Caco-2 (cell line): ENCODE measurements at regions of chr11 and their contacts with region 1.

Region 1: GRCh38 chr11:96098514-96099241 is 174.8 kb upstream of the MTMR2 start:
- DNase-seq: peak; percentile 90 to 91
- H3K4me3 ChIP-seq: no peak overlapping the region
- H3K4me3 Mint-ChIP-seq: peak overlapping the region; percentile 65
- H3K27ac Mint-ChIP-seq: peak overlapping the region; percentile 94
- H3K4me1 ChIP-seq: peaks cover 75% of the 10 kb centered on the region
- H3K4me1 Mint-ChIP-seq: peaks cover 71% of the 10 kb centered on the region
- H3K27me3 ChIP-seq: no peaks in the 10 kb centered on the region
- H3K27me3 Mint-ChIP-seq: no peaks in the 10 kb centered on the region
- CTCF ChIP-seq: no peak

Region 2: GRCh38 chr11:95688580-95689189 is 410.0 kb before region 1 on chr11:
- CTCF ChIA-PET with region 1: no interaction called
- POLR2A ChIA-PET with region 1: no interaction called
- intact Hi-C with region 1: no loop called
- DNase-seq: no peak
- H3K4me3 ChIP-seq: no peak overlapping the region
- H3K4me3 Mint-ChIP-seq: no peak overlapping the region
- H3K27ac Mint-ChIP-seq: no peak overlapping the region
- H3K4me1 ChIP-seq: no peaks in the 10 kb centered on the region
- H3K4me1 Mint-ChIP-seq: no peaks in the 10 kb centered on the region
- H3K27me3 ChIP-seq: no peaks in the 10 kb centered on the region; the same call in 1 of the 2 replicates
- H3K27me3 Mint-ChIP-seq: no peaks in the 10 kb centered on the region
- CTCF ChIP-seq: no peak

Region 3: DNA sequence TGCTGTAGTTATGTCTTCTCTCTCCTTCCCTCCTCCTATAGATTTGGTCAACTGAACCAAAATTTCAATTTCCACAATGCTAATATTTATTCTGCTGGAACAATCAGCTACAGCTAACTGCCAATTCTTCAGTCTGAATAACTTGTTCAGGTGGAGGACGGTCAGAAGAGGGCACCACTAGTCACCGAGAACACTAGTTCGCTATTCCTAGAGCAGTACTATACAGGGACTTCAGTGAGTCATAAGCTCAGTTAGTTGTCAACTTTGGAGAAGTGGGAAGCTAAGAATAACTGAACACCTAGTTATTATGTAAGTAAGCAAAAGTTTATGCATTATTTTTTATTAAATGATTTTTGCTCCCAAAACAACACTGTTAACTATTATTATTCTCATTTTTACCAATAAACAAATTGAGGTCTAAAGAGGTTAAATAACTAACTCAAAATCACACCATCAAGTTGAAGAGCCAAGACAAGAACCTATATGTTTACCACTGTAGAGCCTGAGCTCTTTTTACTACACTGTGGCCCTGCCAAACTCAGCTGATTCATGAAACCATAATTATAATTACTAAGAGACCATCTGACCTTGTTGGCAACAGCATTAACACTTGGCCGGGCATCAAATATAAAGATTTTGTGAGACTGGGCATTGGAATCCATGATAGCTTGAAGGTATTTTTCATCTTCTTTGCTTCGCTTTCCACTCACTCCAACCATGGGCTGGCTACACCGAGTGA is 249.4 kb before region 1 on chr11:
- CTCF ChIA-PET with region 1: no interaction called
- POLR2A ChIA-PET with region 1: no interaction called
- intact Hi-C with region 1: loop called (anchors 2 kb)
- DNase-seq: peak; percentile 75 to 81
- H3K4me3 ChIP-seq: no peak overlapping the region
- H3K4me3 Mint-ChIP-seq: no peak overlapping the region
- H3K27ac Mint-ChIP-seq: no peak overlapping the region
- H3K4me1 ChIP-seq: no peaks in the 10 kb centered on the region
- H3K4me1 Mint-ChIP-seq: no peaks in the 10 kb centered on the region
- H3K27me3 ChIP-seq: no peaks in the 10 kb centered on the region
- H3K27me3 Mint-ChIP-seq: no peaks in the 10 kb centered on the region
- CTCF ChIP-seq: peak; percentile 71 to 85

Region 4: DNA sequence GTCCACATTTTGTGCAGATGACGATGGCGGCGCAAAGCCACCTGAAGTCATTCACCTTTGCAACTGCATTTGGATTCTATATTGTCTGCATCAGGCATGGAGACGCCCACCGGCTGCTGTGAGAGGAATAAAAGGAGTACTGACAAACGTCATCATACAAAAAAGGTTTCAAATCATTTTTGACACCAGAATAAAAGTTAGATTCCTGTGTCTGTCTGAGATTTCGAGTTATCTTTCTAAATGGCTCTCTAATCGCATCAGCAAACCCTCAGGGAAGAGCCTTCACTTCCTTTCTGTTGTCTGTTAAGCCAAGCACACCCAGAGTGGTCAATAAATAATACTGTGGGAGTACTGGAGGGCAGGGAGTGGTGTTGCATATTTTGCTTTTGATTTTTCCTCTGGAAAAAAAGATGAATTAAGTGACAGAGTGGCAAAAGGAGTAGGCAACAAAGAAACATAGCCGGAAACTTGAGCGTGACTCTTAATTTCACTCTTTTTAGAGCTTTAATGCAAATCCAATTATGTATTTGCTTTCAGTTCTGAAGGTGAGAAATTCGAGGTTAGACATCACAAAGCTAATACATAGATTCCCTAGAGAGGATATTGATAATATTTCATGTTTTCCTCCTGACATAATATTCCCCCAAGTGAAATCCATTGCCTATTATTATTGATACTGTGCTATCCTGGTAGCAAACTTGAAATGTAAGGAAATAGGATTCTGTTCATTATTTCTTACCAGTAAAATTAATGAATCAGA is 23.9 kb before region 1 on chr11:
- CTCF ChIA-PET with region 1: no interaction called
- POLR2A ChIA-PET with region 1: no interaction called
- intact Hi-C with region 1: loop called (anchors 1 kb)
- DNase-seq: no peak
- H3K4me3 ChIP-seq: no peak overlapping the region
- H3K4me3 Mint-ChIP-seq: no peak overlapping the region
- H3K27ac Mint-ChIP-seq: no peak overlapping the region
- H3K4me1 ChIP-seq: peaks cover 8% of the 10 kb centered on the region
- H3K4me1 Mint-ChIP-seq: no peaks in the 10 kb centered on the region
- H3K27me3 ChIP-seq: no peaks in the 10 kb centered on the region
- H3K27me3 Mint-ChIP-seq: no peaks in the 10 kb centered on the region
- CTCF ChIP-seq: no peak

Region 5: DNA sequence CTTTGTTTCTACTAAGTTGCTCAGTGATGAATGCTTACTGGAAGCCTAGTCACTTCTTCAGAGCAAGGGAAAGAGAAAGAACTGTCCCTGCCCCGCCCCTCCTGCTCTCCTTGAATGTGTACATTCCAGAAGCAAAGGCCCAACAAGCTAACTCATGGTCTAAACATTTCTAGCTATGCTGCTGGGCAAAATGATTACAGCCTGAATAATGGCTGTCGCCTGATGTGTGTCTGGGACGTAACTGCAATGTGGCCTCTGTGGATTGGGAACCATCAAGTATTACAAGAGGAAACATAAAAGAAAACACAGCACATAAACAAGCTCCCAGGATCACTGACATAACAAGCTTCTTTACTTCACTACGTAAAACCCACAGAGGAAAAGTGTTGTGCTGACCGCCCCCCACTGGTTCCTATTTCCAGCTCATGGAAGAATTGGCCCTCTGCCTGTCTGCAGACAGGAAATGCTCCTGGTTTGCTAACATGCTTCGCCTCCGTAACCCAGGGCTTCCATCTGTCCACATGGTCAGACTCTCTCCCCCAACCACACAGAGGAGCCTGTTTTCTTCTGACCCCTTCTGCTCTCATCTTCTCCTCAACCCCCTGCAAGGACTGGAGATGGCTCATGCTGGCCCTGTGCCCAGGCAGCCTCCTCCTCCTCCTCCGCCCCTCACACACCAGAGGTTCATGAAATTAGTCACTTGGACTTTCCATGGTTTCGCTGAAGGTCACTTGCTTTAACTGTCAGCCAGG is 57.1 kb after region 1 on chr11:
- CTCF ChIA-PET with region 1: interaction called, 5 read pairs
- POLR2A ChIA-PET with region 1: no interaction called
- intact Hi-C with region 1: loop called (anchors 1 kb)
- DNase-seq: peak; percentile 79 to 82
- H3K4me3 ChIP-seq: no peak overlapping the region
- H3K4me3 Mint-ChIP-seq: no peak overlapping the region
- H3K27ac Mint-ChIP-seq: peak overlapping the region; percentile 77
- H3K4me1 ChIP-seq: peaks cover 35% of the 10 kb centered on the region
- H3K4me1 Mint-ChIP-seq: peaks cover 17% of the 10 kb centered on the region
- H3K27me3 ChIP-seq: no peaks in the 10 kb centered on the region
- H3K27me3 Mint-ChIP-seq: no peaks in the 10 kb centered on the region
- CTCF ChIP-seq: peak in 1 of 2 experiments; percentile 40

Region 6: DNA sequence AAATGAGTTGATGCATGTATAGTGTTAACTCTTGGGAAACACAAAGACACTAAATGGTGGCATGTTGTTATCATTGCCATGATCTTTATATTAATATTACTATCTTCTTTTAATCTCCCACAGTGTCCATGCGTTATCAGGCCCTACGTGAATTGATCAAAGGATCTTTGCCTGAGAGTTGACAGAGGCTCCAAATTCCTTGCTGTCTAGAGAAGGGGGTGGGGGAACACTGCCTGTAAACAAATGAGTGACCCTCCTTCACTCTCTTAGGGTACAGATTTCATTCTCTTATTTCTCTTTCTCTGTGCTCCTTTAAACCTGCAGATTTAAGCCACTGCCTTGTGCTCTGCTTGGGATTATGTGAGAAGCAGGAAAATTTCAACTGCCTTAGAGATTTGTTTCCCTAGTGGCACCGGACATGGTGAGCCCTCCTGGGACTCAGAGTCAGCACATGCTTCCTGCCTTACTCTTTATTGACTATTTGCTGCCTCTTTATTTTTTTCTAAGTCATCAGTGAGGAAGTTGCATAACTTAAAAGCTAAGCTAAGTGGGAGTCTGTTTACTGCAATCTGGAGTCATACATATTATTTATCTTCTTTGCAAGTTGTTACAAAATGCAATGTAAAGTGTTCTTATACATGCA is 121.4 kb after region 1 on chr11:
- CTCF ChIA-PET with region 1: no interaction called
- POLR2A ChIA-PET with region 1: interaction called, 3 read pairs
- intact Hi-C with region 1: loop called (anchors 5 kb)
- DNase-seq: peak; percentile 65 to 67
- H3K4me3 ChIP-seq: no peak overlapping the region
- H3K4me3 Mint-ChIP-seq: peak overlapping the region; percentile 45
- H3K27ac Mint-ChIP-seq: peak overlapping the region; percentile 81
- H3K4me1 ChIP-seq: peaks cover 47% of the 10 kb centered on the region
- H3K4me1 Mint-ChIP-seq: peaks cover 46% of the 10 kb centered on the region
- H3K27me3 ChIP-seq: no peaks in the 10 kb centered on the region
- H3K27me3 Mint-ChIP-seq: no peaks in the 10 kb centered on the region
- CTCF ChIP-seq: no peak

Region 7: DNA sequence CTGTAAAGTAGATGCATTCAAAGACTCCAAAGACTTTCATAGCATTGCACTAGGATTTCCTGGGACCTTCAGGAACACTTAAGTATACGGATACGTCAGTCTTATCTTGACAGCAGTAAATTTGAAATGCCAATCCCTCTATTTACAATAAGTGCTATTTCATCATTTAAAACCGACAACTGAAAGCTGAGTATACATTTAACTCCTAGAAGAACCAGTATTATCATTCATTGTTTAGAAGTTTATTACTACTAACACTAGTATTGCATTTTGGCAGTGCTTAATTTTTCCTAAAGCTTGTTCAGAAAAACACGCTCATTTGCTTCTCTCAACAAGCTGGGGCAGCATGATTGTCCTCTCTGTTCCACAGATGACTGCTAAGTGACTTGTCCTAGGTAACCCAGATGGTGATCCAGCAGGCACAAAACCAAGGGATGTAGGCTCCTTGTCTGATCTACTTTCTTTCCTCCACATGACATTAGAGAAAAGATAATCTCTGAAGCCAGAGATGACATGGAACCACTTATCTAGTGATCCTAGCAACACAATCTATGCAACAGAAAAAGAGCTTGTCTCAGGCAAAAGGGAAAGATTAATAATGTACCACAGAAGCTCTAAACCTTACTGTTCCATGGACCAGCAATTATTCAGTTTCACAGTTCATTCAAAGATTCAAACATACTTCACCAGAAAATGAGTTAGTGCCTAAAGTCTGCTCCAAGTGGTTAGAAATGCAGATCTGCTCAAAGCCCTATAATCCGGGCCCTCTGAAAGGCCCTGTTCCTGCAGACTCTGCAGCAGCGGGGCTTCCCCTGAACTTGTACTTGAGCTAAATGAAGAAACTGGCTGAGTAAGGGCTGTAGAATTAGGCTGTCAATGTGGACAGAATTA is 239.1 kb after region 1 on chr11:
- CTCF ChIA-PET with region 1: interaction called, 6 read pairs
- POLR2A ChIA-PET with region 1: interaction called, 5 read pairs
- intact Hi-C with region 1: loop called (anchors 1 kb)
- DNase-seq: peak in 1 of 2 experiments; percentile 64
- H3K4me3 ChIP-seq: no peak overlapping the region
- H3K4me3 Mint-ChIP-seq: peak overlapping the region; percentile 10
- H3K27ac Mint-ChIP-seq: peak overlapping the region; percentile 10
- H3K4me1 ChIP-seq: peaks cover 46% of the 10 kb centered on the region
- H3K4me1 Mint-ChIP-seq: peaks cover 47% of the 10 kb centered on the region
- H3K27me3 ChIP-seq: no peaks in the 10 kb centered on the region
- H3K27me3 Mint-ChIP-seq: no peaks in the 10 kb centered on the region
- CTCF ChIP-seq: no peak